GM12878 (cell line): ENCODE measurements at regions of chr18 and their contacts with region 1.

Region 1: GRCh38 chr18:11040823-11041656 is 108.3 kb downstream of the PIEZO2 start:
- DNase-seq: no peak
- ATAC-seq: peak; percentile 75
- H3K4me3 ChIP-seq: no peak overlapping the region
- H3K27ac ChIP-seq: peak overlapping the region; percentile 52
- H3K4me1 ChIP-seq: peaks cover 30% of the 10 kb centered on the region
- H3K27me3 ChIP-seq: no peaks in the 10 kb centered on the region
- CTCF ChIP-seq: peak; percentile 67 to 74 (median 69); a peak in 5 of 6 replicates
- EP300 ChIP-seq: no peak
- POLR2A ChIP-seq: no peak
- RAD21 ChIP-seq: peak; percentile 88

Region 2: GRCh38 chr18:10787293-10787901 is 253.6 kb before region 1 on chr18:
- CTCF ChIA-PET with region 1: interaction called, 27 read pairs
- POLR2A ChIA-PET with region 1: no interaction called
- RAD21 ChIA-PET with region 1: interaction called, 10 read pairs
- SMC1A ChIA-PET with region 1: interaction called, 6 read pairs
- in situ Hi-C with region 1: no loop called
- intact Hi-C with region 1: loop called (anchors 1 kb)
- DNase-seq: peak; percentile 77
- ATAC-seq: peak; percentile 96
- H3K4me3 ChIP-seq: no peak overlapping the region
- H3K27ac ChIP-seq: no peak overlapping the region
- H3K4me1 ChIP-seq: no peaks in the 10 kb centered on the region; the same call in 1 of the 2 replicates
- H3K27me3 ChIP-seq: no peaks in the 10 kb centered on the region
- CTCF ChIP-seq: peak; percentile 79 to 97 (median 82)
- EP300 ChIP-seq: peak; percentile 48 to 55; a peak in 2 of 4 replicates
- POLR2A ChIP-seq: no peak
- RAD21 ChIP-seq: peak; percentile 88

Region 3: GRCh38 chr18:10878703-10879102 is 162.3 kb before region 1 on chr18:
- CTCF ChIA-PET with region 1: interaction called, 12 read pairs
- POLR2A ChIA-PET with region 1: interaction called, 5 read pairs
- RAD21 ChIA-PET with region 1: interaction called, 15 read pairs
- SMC1A ChIA-PET with region 1: interaction called, 17 read pairs
- in situ Hi-C with region 1: no loop called
- intact Hi-C with region 1: no loop called
- DNase-seq: peak; percentile 93
- ATAC-seq: peak; percentile 82
- H3K4me3 ChIP-seq: no peak overlapping the region
- H3K27ac ChIP-seq: peak overlapping the region; percentile 88
- H3K4me1 ChIP-seq: peaks cover 49% of the 10 kb centered on the region
- H3K27me3 ChIP-seq: no peaks in the 10 kb centered on the region
- CTCF ChIP-seq: no peak
- EP300 ChIP-seq: peak; percentile 90 to 96
- POLR2A ChIP-seq: no peak
- RAD21 ChIP-seq: 0 out of 2 replicates have a peak, but pooled peaks have one; percentile 17

Region 4: GRCh38 chr18:10953672-10954071 is 87.4 kb before region 1 on chr18:
- CTCF ChIA-PET with region 1: interaction called, 35 read pairs
- POLR2A ChIA-PET with region 1: interaction called, 10 read pairs
- RAD21 ChIA-PET with region 1: interaction called, 78 read pairs
- SMC1A ChIA-PET with region 1: interaction called, 118 read pairs
- in situ Hi-C with region 1: no loop called
- intact Hi-C with region 1: loop called (anchors 2 kb)
- DNase-seq: peak; percentile 84
- ATAC-seq: peak; percentile 65
- H3K4me3 ChIP-seq: peak overlapping the region; percentile 30; the same call in 1 of the 2 replicates
- H3K27ac ChIP-seq: peak overlapping the region; percentile 100
- H3K4me1 ChIP-seq: peaks cover 41% of the 10 kb centered on the region
- H3K27me3 ChIP-seq: no peaks in the 10 kb centered on the region
- CTCF ChIP-seq: no peak; a peak in 1 of 6 replicates
- EP300 ChIP-seq: peak; percentile 55 to 69; a peak in 3 of 4 replicates
- POLR2A ChIP-seq: peak; percentile 80
- RAD21 ChIP-seq: peak; percentile 21; the same call in 1 of the 2 replicates

Region 5: DNA sequence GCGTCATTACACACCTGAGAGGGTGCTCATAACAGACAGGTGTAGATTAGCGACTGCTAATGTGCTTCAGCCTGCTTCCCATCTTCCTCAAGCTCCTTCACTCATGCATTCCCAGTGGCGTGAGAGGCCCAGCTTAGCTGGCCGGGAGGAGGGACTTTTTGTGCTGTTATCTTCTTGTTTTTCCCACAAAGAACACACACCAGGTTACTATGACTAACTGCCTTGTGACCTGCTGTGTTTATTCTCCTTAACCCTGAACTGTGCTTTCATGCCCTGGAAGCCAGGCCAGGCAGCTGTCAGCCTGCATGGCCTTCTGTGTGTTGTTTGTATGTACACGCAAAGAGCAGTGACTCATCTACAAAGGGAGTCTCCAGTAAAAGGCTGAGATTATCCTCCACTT is 35.5 kb before region 1 on chr18:
- CTCF ChIA-PET with region 1: interaction called, 13 read pairs
- POLR2A ChIA-PET with region 1: interaction called, 3 read pairs
- RAD21 ChIA-PET with region 1: interaction called, 24 read pairs
- SMC1A ChIA-PET with region 1: interaction called, 37 read pairs
- in situ Hi-C with region 1: no loop called
- intact Hi-C with region 1: loop called (anchors 5 kb)
- DNase-seq: peak; percentile 58
- ATAC-seq: peak; percentile 76
- H3K4me3 ChIP-seq: no peak overlapping the region
- H3K27ac ChIP-seq: peak overlapping the region; percentile 82
- H3K4me1 ChIP-seq: peaks cover 31% of the 10 kb centered on the region
- H3K27me3 ChIP-seq: no peaks in the 10 kb centered on the region
- CTCF ChIP-seq: no peak
- EP300 ChIP-seq: peak in 1 of 2 experiments; percentile 76; a peak in 2 of 4 replicates
- POLR2A ChIP-seq: no peak
- RAD21 ChIP-seq: no peak

Region 6: GRCh38 chr18:11052800-11053199 is 11.8 kb after region 1 on chr18:
- CTCF ChIA-PET with region 1: interaction called, 55 read pairs
- POLR2A ChIA-PET with region 1: interaction called, 4 read pairs
- RAD21 ChIA-PET with region 1: interaction called, 31 read pairs
- SMC1A ChIA-PET with region 1: interaction called, 57 read pairs
- in situ Hi-C with region 1: no loop called
- intact Hi-C with region 1: no loop called
- DNase-seq: no peak
- ATAC-seq: peak; percentile 92
- H3K4me3 ChIP-seq: no peak overlapping the region
- H3K27ac ChIP-seq: peak overlapping the region; percentile 22; the same call in 1 of the 2 replicates
- H3K4me1 ChIP-seq: peaks cover 15% of the 10 kb centered on the region
- H3K27me3 ChIP-seq: no peaks in the 10 kb centered on the region
- CTCF ChIP-seq: no peak
- EP300 ChIP-seq: no peak; a peak in 1 of 4 replicates
- POLR2A ChIP-seq: no peak
- RAD21 ChIP-seq: no peak